Mammary epithelial cell (primary cell): ENCODE measurements at regions of chr9 and their contacts with region 1.

Region 1: DNA sequence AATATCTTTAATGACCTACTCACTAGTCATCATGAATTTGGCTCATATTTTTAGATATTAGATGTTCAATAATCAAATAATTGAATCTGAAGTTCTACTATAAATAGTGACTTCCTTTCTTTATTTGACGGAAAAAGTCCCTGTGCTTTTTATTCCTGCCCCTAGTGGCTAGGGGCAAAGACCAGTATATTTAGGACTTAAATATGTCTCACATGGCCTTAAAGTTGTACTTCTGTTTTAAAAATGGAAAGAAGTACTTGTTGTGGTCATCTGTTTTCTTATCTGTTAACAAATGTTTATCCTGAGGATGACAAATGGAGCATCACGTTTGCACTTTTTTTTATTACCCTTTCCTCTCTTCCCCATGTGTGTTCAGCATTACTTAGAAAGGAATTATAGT is 89.2 kb upstream of the GRHPR start:
- DNase-seq: no peak
- H3K4me3 ChIP-seq: no peak overlapping the region
- H3K27ac ChIP-seq: no peak overlapping the region
- H3K4me1 ChIP-seq: no peaks in the 10 kb centered on the region
- H3K27me3 ChIP-seq: no peaks in the 10 kb centered on the region
- CTCF ChIP-seq: no peak

Region 2: DNA sequence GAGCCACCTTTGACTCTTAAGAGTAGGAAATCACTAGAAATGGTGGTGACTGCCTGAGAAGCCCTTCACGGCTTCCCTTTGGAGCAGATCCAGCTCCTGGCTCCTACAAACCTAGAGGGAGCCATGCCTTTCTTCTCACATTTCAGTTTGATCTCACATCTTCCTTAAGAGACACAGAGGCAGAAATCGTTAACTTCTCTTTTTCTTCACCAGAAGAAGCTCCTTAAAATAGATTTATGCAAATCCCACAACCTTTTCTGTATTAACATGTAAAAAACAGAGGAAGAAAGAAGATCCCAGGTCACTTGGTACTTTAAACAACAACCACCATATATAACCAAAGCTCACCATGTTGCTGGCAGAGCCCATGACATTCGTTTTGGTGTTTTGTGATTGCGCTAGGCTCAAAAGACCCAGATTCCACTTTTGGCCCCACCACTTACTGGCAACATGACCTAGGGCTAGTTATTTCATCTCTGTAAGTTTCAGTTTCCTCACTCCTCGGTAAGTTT is 328.8 kb before region 1 on chr9:
- CTCF ChIA-PET with region 1: no interaction called
- dilution Hi-C with region 1: no loop called
- in situ Hi-C with region 1: no loop called
- intact Hi-C with region 1: loop called (anchors 10 kb)
- DNase-seq: no peak
- H3K4me3 ChIP-seq: no peak overlapping the region
- H3K27ac ChIP-seq: no peak overlapping the region
- H3K4me1 ChIP-seq: no peaks in the 10 kb centered on the region
- H3K27me3 ChIP-seq: peaks cover 17% of the 10 kb centered on the region
- CTCF ChIP-seq: no peak